MCF 10A (cell line): ENCODE measurements at regions of chr3 and their contacts with region 1.

Region 1: DNA sequence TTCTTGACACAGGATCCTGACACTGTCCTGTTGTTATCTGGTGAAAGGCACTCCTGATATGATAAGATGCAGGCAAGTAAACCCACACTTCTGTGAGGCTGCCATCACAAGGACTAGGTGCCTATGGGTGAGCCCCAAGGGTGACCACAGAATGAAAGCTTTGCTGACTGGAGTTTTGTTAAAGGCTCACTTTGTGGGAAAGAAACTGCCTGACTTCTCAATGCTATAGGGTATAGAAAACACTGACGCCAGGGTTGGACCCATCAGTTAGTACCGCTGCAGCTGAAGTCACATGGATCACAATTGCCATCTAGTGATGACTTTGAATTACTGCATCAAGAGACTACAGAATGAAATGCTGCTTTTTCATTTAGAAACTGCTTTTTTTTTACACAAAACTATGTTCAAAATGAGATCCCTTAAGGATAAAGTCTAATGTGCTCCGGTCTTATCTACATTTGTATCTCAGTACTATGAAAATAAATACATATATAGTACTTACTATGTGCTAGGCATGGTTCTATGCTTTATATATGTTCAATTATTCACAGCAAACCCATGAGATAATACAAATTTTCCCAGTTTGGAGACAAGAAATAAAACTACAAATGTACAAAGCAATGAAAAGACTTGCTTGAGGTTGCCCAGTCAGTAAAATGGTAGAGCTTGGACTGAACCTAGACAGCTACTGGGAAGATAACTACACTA is 64.2 kb upstream of the CMSS1 start:
- DNase-seq: peak; percentile 71
- H3K4me3 Mint-ChIP-seq: no peak overlapping the region
- H3K27ac Mint-ChIP-seq: no peak overlapping the region
- H3K4me1 Mint-ChIP-seq: peaks cover 17% of the 10 kb centered on the region
- H3K27me3 Mint-ChIP-seq: no peaks in the 10 kb centered on the region
- CTCF ChIP-seq: peak; percentile 74

Region 2: GRCh38 chr3:98817547-98818041 is 935.8 kb before region 1 on chr3:
- CTCF ChIA-PET with region 1: interaction called, 10 read pairs
- POLR2A ChIA-PET with region 1: no interaction called
- intact Hi-C with region 1: loop called (anchors 5 kb)
- DNase-seq: peak; percentile 50
- H3K4me3 Mint-ChIP-seq: no peak overlapping the region
- H3K27ac Mint-ChIP-seq: peak overlapping the region; percentile 27
- H3K4me1 Mint-ChIP-seq: peaks cover 13% of the 10 kb centered on the region
- H3K27me3 Mint-ChIP-seq: no peaks in the 10 kb centered on the region
- CTCF ChIP-seq: peak; percentile 53

Region 3: DNA sequence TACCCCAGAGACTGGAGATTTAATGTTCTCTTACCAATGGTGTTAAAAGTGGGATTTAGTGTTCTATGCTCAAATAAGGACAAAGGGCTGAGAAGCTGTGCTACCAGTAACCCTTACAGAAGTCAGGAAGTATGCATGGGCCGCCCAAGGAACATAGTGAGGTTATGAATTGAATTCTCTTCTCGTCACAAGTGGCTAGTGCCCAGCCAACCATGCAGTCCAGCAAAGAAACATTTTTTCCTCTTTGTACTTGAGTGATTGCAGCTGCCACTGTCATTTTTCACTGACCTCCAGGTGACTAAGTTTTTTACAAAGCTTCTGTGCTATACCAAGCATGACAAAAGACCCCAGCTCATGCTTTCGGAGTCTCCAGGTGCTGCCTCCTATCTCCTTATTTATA is 741.4 kb before region 1 on chr3:
- CTCF ChIA-PET with region 1: interaction called, 14 read pairs
- POLR2A ChIA-PET with region 1: no interaction called
- intact Hi-C with region 1: no loop called
- DNase-seq: no peak
- H3K4me3 Mint-ChIP-seq: no peak overlapping the region
- H3K27ac Mint-ChIP-seq: no peak overlapping the region
- H3K4me1 Mint-ChIP-seq: no peaks in the 10 kb centered on the region
- H3K27me3 Mint-ChIP-seq: no peaks in the 10 kb centered on the region
- CTCF ChIP-seq: no peak

Region 4: GRCh38 chr3:99114565-99115291 is 638.7 kb before region 1 on chr3:
- CTCF ChIA-PET with region 1: interaction called, 14 read pairs
- POLR2A ChIA-PET with region 1: no interaction called
- intact Hi-C with region 1: loop called (anchors 1 kb)
- DNase-seq: peak; percentile 76
- H3K4me3 Mint-ChIP-seq: no peak overlapping the region
- H3K27ac Mint-ChIP-seq: no peak overlapping the region
- H3K4me1 Mint-ChIP-seq: no peaks in the 10 kb centered on the region
- H3K27me3 Mint-ChIP-seq: no peaks in the 10 kb centered on the region
- CTCF ChIP-seq: peak; percentile 82

Region 5: GRCh38 chr3:99499235-99500158 is 253.9 kb before region 1 on chr3:
- CTCF ChIA-PET with region 1: interaction called, 42 read pairs
- POLR2A ChIA-PET with region 1: no interaction called
- intact Hi-C with region 1: loop called (anchors 1 kb)
- DNase-seq: peak; percentile 70
- H3K4me3 Mint-ChIP-seq: no peak overlapping the region
- H3K27ac Mint-ChIP-seq: no peak overlapping the region
- H3K4me1 Mint-ChIP-seq: peaks cover 28% of the 10 kb centered on the region
- H3K27me3 Mint-ChIP-seq: no peaks in the 10 kb centered on the region
- CTCF ChIP-seq: peak; percentile 61

Region 6: DNA sequence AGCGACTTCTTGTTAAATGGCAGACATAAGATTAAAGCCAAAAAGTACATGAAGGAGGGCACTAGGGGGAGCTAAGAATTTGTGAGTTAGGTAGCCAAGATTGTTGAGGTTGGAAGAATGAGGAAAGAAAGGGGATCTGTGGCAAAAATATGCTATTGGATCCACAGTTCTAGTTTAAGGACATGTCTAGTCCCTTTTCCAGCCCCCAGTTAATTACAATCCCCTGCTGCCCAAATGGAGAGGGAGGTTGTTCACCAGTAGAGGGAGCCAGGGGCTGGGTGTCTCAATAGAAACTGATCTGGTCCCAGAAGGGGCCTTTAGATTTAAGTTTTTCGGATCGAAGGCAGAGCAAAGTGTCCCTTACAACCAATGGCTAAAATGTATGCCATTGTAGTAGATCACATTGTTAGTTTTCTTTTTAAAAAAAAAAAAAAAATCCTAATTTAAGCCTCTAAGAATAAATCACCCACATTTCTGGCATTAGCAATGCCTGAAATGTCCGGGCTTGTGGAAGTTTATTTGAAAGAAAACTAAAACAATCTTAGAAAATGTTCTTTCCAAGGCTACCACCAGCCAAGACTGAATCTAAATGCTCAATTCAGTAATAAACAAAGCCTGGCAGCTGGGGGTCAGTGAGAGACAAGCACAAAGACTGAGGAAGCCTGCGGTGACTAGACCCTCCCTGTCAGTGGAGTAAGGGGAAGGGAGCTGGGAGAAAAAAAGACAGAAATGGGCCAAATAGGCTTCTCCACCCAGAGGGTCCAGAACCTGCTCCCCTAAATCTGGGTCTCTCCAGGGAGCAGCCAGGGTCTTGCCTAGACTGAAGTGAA is 107.9 kb before region 1 on chr3:
- CTCF ChIA-PET with region 1: interaction called, 24 read pairs
- POLR2A ChIA-PET with region 1: interaction called, 4 read pairs
- intact Hi-C with region 1: loop called (anchors 2 kb)
- DNase-seq: peak; percentile 57
- H3K4me3 Mint-ChIP-seq: no peak overlapping the region
- H3K27ac Mint-ChIP-seq: peak overlapping the region; percentile 63
- H3K4me1 Mint-ChIP-seq: peaks cover 84% of the 10 kb centered on the region
- H3K27me3 Mint-ChIP-seq: no peaks in the 10 kb centered on the region
- CTCF ChIP-seq: peak; percentile 85

Region 7: GRCh38 chr3:99741588-99741987 is 11.8 kb before region 1 on chr3:
- CTCF ChIA-PET with region 1: no interaction called
- POLR2A ChIA-PET with region 1: no interaction called
- intact Hi-C with region 1: no loop called
- DNase-seq: no peak
- H3K4me3 Mint-ChIP-seq: no peak overlapping the region
- H3K27ac Mint-ChIP-seq: no peak overlapping the region
- H3K4me1 Mint-ChIP-seq: no peaks in the 10 kb centered on the region
- H3K27me3 Mint-ChIP-seq: no peaks in the 10 kb centered on the region
- CTCF ChIP-seq: no peak

Region 8: DNA sequence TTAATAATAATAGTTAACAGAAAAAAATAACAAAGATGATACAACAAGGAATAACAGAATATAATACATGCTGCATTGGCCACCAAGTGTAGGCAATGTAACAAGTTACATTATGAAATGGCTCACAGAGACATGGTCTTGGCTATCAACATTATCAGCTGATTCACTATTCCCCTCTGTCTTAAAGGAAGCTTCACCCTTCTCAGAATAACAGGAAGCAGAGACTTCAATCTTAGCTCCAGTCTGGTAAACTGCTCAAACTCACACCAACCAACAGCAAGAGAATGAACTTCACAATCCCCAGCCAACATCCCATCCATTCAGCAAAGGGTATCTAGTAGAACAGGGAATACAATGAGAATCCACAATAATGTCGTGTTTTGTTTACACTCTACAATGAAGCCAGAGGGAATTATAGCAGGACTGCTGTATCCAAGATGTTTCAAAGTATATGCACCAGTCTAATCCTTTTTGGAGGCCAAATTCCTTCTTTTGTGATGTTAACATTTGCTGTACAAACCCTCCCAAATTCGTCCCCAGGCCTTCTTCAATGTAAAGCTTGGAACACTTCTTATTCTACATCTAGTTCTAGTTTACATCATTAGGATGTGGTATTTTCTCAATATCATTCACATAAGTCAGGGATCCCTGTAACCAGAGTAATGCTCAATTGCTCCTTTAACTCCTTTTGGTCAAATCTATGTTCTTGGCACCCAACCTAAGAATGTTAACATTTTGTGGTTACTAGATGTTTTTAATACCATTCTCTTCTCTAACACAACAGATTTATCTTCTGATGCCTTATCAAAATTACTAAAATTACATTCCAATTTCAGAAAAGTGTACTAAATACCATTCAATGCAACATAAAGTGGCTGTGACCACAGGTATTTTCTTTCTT is 11.9 kb after region 1 on chr3:
- CTCF ChIA-PET with region 1: interaction called, 11 read pairs
- POLR2A ChIA-PET with region 1: interaction called, 4 read pairs
- intact Hi-C with region 1: no loop called
- DNase-seq: no peak
- H3K4me3 Mint-ChIP-seq: no peak overlapping the region
- H3K27ac Mint-ChIP-seq: no peak overlapping the region
- H3K4me1 Mint-ChIP-seq: peaks cover 6% of the 10 kb centered on the region
- H3K27me3 Mint-ChIP-seq: no peaks in the 10 kb centered on the region
- CTCF ChIP-seq: no peak